ENCODE measurements at regions of chr10 and their contacts with region 1.

Region 1: GRCh38 chr10:104045151-104046089 is 40.3 kb downstream of the COL17A1 start:
- DNase-seq: peak; percentile 78 to 86
- ATAC-seq: peak; percentile 87 to 96
- H3K4me3 ChIP-seq: no peak overlapping the region
- H3K27ac ChIP-seq: peak overlapping the region; percentile 48 to 79; a peak in 5 of 6 replicates
- H3K4me1 ChIP-seq: peaks cover 27% of the 10 kb centered on the region
- CTCF ChIP-seq: peak; percentile 93
- EP300 ChIP-seq: no peak
- POLR2A ChIP-seq: no peak
- RAD21 ChIP-seq: peak; percentile 99

Region 2: DNA sequence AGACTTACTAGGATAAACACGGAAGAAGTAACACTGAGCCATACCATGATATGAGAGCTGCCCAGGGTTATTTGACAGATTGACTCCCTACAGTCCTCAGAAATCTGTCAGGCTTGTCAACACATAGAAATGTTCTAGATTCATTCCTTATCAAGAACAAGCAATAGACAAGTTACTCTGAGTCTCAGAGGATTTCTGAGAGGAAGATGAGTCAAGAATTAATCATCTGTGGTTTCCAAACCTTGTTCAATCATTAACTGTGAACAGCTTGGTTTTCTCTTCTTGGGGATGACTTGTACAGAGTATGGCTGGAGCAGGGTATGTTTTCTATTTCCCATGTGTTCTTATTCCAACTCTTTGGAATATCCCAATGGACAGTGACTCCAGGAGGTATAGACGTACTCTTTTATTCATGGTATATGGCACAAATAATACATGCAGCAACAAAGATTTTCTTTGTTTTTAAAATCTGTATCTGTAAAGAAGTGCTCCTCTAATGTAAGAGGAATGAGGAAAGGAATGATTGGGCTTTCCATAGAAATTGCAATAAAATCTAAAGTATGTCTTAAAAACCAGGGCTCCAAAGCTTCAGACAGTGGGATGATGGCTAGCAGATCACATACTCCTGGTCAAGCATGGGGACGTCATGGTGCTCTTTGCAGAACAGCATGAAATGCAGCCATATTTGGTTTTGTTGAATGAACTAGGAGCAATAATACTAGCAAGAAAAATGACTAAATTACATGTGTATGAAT is 64.7 kb after region 1 on chr10:
- CTCF ChIA-PET with region 1: interaction called, 11 read pairs
- POLR2A ChIA-PET with region 1: interaction called, 4 read pairs
- DNase-seq: peak; percentile 62 to 92
- ATAC-seq: peak; percentile 98 to 99
- H3K4me3 ChIP-seq: no peak overlapping the region
- H3K27ac ChIP-seq: peak overlapping the region; percentile 89 to 93
- H3K4me1 ChIP-seq: peaks cover 33% of the 10 kb centered on the region
- CTCF ChIP-seq: no peak
- EP300 ChIP-seq: peak in 1 of 2 experiments; percentile 46; a peak in 2 of 5 replicates
- POLR2A ChIP-seq: no peak
- RAD21 ChIP-seq: 0 out of 5 replicates have a peak, but pooled peaks of 1 of the 2 experiments have one; percentile 35

Region 3: GRCh38 chr10:104209575-104210198 is 164.3 kb after region 1 on chr10:
- CTCF ChIA-PET with region 1: interaction called, 34 read pairs
- POLR2A ChIA-PET with region 1: no interaction called
- DNase-seq: peak; percentile 48 to 51
- ATAC-seq: peak; percentile 47 to 90; a peak in 4 of 6 replicates
- H3K4me3 ChIP-seq: no peak overlapping the region
- H3K27ac ChIP-seq: no peak overlapping the region
- H3K4me1 ChIP-seq: no peaks in the 10 kb centered on the region
- CTCF ChIP-seq: peak; percentile 82
- EP300 ChIP-seq: no peak
- POLR2A ChIP-seq: no peak
- RAD21 ChIP-seq: peak; percentile 84 to 89

Region 4: DNA sequence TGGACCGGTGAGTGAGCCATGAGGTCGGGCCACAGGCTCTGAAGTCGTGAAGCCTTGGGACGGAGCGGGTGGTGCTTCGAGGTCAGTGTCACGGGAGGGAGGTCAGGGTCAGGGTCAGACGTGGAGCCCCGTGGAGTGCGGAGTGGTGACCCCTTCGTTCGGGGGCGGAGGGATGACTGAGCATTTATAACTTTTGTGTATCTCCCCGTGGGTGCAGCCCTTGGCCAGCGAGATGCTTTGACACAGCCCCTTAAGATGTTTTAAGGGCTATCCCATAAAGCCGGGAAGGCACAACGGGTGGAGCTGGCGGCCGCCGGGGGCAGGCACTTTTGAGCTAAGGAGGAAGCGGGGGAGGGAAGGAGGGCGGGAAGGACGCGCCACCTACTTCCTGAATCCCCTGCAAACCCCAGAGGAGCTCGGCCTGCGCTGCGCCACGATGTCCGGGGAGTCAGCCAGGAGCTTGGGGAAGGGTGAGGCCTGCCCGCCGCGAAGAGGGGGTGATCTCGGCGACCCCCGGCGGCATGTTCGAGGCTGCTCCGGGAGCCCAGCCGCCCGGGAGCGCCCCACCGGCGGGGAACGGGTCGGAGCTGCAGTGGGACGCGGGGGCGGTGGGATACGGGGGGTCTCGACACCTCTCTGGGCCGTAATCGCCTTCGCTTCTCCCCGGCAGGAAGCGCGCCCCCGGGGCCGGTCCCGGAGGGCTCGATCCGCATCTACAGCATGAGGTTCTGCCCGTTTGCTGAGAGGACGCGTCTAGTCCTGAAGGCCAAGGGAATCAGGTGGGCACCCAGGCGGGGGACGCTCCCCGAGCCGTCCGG is 209.3 kb after region 1 on chr10 and contains the start of gene GSTO1:
- CTCF ChIA-PET with region 1: interaction called, 13 read pairs
- POLR2A ChIA-PET with region 1: no interaction called
- DNase-seq: peak; percentile 77 to 79
- ATAC-seq: peak; percentile 89 to 95
- H3K4me3 ChIP-seq: peak within 1 kb of the TSS; percentile 99
- H3K27ac ChIP-seq: peak within 1 kb of the TSS; percentile 98 to 99
- H3K4me1 ChIP-seq: peaks cover 25% of the 10 kb centered on the region
- CTCF ChIP-seq: no peak
- EP300 ChIP-seq: no peak
- POLR2A ChIP-seq: peak; percentile 90
- RAD21 ChIP-seq: 0 out of 5 replicates have a peak, but pooled peaks of 1 of the 2 experiments have one; percentile 9
- polyA plus RNA-seq, gene GSTO1: 172 and 204 TPM in 2 replicates